PC-3 (cell line): ENCODE measurements at regions of chr1 and their contacts with region 1.

Region 1: DNA sequence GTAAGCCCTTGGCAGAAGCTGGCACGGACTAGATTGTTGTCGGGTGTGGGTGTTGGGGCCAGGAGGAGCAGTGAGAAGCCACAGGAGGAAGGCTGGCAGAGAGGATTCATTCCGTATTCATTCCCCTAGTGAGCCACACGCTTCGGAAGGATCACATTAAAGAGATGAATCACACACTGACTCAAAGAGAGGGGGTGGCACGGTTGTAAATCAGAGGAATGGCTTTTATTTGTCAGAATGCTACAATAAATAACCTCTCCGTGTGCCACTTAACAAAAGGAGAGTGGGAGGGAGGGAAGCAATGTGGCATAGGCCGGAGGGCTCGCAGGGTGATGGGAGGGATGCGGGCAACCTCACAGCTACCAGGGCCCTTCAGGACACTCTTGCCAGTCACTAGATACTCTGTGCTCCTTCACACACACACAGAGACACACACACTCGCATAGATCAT is 135.5 kb downstream of the HIVEP3 start:
- DNase-seq: peak; percentile 97
- ATAC-seq: peak; percentile 96
- H3K4me3 ChIP-seq: peak overlapping the region; percentile 46
- H3K27ac ChIP-seq: peak overlapping the region; percentile 65
- H3K4me1 ChIP-seq: peaks cover 27% of the 10 kb centered on the region
- H3K27me3 ChIP-seq: no peaks in the 10 kb centered on the region
- CTCF ChIP-seq: no peak

Region 2: GRCh38 chr1:41670217-41670957 is 112.8 kb before region 1 on chr1:
- CTCF ChIA-PET with region 1: no interaction called
- POLR2A ChIA-PET with region 1: no interaction called
- intact Hi-C with region 1: loop called (anchors 2 kb)
- DNase-seq: peak; percentile 88
- ATAC-seq: peak; percentile 89
- H3K4me3 ChIP-seq: no peak overlapping the region
- H3K27ac ChIP-seq: peak overlapping the region; percentile 66
- H3K4me1 ChIP-seq: peaks cover 71% of the 10 kb centered on the region
- H3K27me3 ChIP-seq: no peaks in the 10 kb centered on the region
- CTCF ChIP-seq: no peak

Region 3: DNA sequence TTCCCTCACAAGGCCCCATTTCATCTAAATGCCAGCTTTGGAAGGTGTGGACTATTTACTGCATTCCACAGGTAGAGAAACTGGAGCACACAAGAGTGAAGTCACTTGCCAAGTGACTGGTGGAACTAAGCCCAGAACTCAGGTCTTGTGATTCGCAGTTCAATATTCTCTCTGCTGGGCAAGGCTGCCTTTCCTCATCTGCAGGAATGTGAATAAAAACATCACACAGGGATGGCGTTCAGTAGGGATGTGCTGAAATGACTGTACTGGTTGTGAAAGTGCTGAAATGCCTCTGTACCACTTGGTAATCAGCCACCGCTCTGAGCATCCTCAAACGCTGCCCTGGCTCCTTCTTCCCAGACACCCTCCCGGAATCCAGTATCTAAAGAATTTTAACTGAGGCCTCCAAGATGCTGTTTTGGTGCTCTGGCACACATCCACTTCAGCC is 10.0 kb before region 1 on chr1:
- CTCF ChIA-PET with region 1: no interaction called
- POLR2A ChIA-PET with region 1: no interaction called
- intact Hi-C with region 1: loop called (anchors 1 kb)
- DNase-seq: peak; percentile 73
- ATAC-seq: peak; percentile 65
- H3K4me3 ChIP-seq: no peak overlapping the region
- H3K27ac ChIP-seq: no peak overlapping the region
- H3K4me1 ChIP-seq: peaks cover 42% of the 10 kb centered on the region
- H3K27me3 ChIP-seq: no peaks in the 10 kb centered on the region
- CTCF ChIP-seq: no peak